ENCODE measurements at regions of chr13 and their contacts with region 1.

Region 1: GRCh38 chr13:102845630-102846260 is at the start of gene ERCC5:
- DNase-seq: peak; percentile 94 to 99 (median 97)
- ATAC-seq: peak; percentile 69
- H3K4me3 ChIP-seq: peak within 1 kb of the TSS; percentile 94 to 96
- H3K4me3 Mint-ChIP-seq: peak within 1 kb of the TSS; percentile 89
- H3K27ac ChIP-seq: peak within 1 kb of the TSS; percentile 98 to 99
- H3K27ac Mint-ChIP-seq: peak within 1 kb of the TSS; percentile 97
- H3K4me1 ChIP-seq: peaks cover 41% of the 10 kb centered on the region
- H3K4me1 Mint-ChIP-seq: peaks cover 45% of the 10 kb centered on the region
- H3K27me3 ChIP-seq: no peaks in the 10 kb centered on the region
- H3K27me3 Mint-ChIP-seq: no peaks in the 10 kb centered on the region
- CTCF ChIP-seq: no peak
- total RNA-seq, gene ERCC5: 109 to 121 TPM

Region 2: GRCh38 chr13:102580552-102581169 is 265.1 kb before region 1 on chr13:
- CTCF ChIA-PET with region 1: interaction called, 7 read pairs
- POLR2A ChIA-PET with region 1: interaction called, 9 read pairs
- intact Hi-C with region 1: loop called (anchors 1 kb)
- DNase-seq: peak in 4 of 9 experiments; percentile 20 to 80 (median 60)
- ATAC-seq: peak; percentile 87
- H3K4me3 ChIP-seq: no peak overlapping the region
- H3K4me3 Mint-ChIP-seq: no peak overlapping the region
- H3K27ac ChIP-seq: no peak overlapping the region
- H3K27ac Mint-ChIP-seq: no peak overlapping the region
- H3K4me1 ChIP-seq: peaks cover 9% of the 10 kb centered on the region
- H3K4me1 Mint-ChIP-seq: peaks cover 16% of the 10 kb centered on the region
- H3K27me3 ChIP-seq: peaks cover 0 to 2% of the 10 kb centered on the region in 2 experiments
- H3K27me3 Mint-ChIP-seq: peaks cover 3% of the 10 kb centered on the region
- CTCF ChIP-seq: peak; percentile 88

Region 3: GRCh38 chr13:102680842-102681740 is 164.7 kb before region 1 on chr13:
- CTCF ChIA-PET with region 1: interaction called, 3 read pairs
- POLR2A ChIA-PET with region 1: no interaction called
- intact Hi-C with region 1: loop called in 1 of 2 experiments (anchors 5 kb)
- DNase-seq: peak in 3 of 9 experiments; percentile 10 to 45 (median 22)
- ATAC-seq: peak; percentile 68
- H3K4me3 ChIP-seq: no peak overlapping the region
- H3K4me3 Mint-ChIP-seq: no peak overlapping the region
- H3K27ac ChIP-seq: peak overlapping the region in 1 of 2 experiments; percentile 14
- H3K27ac Mint-ChIP-seq: peak overlapping the region; percentile 80
- H3K4me1 ChIP-seq: peaks cover 1% of the 10 kb centered on the region
- H3K4me1 Mint-ChIP-seq: peaks cover 29% of the 10 kb centered on the region
- H3K27me3 ChIP-seq: no peaks in the 10 kb centered on the region
- H3K27me3 Mint-ChIP-seq: no peaks in the 10 kb centered on the region
- CTCF ChIP-seq: no peak

Region 4: GRCh38 chr13:102742101-102742500 is 103.6 kb before region 1 on chr13:
- CTCF ChIA-PET with region 1: no interaction called
- POLR2A ChIA-PET with region 1: no interaction called
- intact Hi-C with region 1: no loop called
- DNase-seq: no peak
- ATAC-seq: no peak
- H3K4me3 ChIP-seq: no peak overlapping the region
- H3K4me3 Mint-ChIP-seq: no peak overlapping the region
- H3K27ac ChIP-seq: no peak overlapping the region
- H3K27ac Mint-ChIP-seq: no peak overlapping the region
- H3K4me1 ChIP-seq: no peaks in the 10 kb centered on the region
- H3K4me1 Mint-ChIP-seq: no peaks in the 10 kb centered on the region
- H3K27me3 ChIP-seq: peaks cover 0 to 2% of the 10 kb centered on the region in 2 experiments
- H3K27me3 Mint-ChIP-seq: peaks cover 38% of the 10 kb centered on the region
- CTCF ChIP-seq: no peak

Region 5: DNA sequence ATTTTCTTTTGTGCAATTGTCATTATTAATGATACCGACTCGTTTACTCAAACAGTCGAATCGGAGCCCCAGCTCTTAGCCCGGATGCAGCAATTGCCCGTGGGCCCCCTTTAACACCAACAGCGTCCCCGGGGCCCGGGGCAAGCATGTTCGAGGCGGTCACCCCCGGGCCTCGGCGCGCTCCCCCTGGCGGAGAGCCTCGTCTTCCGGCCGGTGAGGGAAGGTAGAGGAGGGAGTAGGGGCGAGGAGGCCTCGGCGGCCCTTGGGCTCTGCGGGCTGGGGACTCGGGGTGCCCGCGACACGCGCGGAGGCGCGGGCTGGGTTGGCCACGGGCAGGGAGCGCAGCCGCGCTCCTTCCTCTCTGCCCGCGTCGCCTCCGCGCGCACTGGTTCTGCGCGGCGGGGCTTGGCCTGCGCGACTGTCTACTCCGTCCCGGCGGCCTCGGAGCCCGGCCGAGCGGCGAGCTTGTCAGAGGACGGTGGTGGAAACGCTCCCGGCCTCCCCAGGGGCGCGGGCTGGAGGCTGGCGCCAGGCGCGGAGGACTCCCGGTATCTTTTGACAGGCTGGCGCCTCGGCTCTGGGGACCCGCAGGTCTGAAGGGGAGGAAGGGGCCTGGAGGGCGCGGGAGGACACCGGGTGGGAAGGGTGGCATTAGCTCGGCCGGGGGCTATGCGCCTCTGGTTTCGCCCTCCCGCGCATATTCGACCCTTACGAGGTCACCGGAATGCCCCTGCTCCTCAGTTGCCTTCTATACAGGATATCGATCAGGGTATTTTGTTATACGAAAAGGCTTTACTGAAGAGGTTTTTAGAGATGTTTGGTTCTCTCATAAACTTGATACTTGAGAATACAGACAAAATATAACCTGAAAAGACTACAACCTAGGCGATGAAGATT is 45.4 kb before region 1 on chr13:
- CTCF ChIA-PET with region 1: interaction called, 6 read pairs
- POLR2A ChIA-PET with region 1: interaction called, 25 read pairs
- intact Hi-C with region 1: loop called (anchors 1 kb)
- DNase-seq: peak; percentile 65 to 89 (median 84)
- ATAC-seq: peak; percentile 77
- H3K4me3 ChIP-seq: peak overlapping the region; percentile 62 to 86
- H3K4me3 Mint-ChIP-seq: peak overlapping the region; percentile 92
- H3K27ac ChIP-seq: peak overlapping the region; percentile 36 to 44
- H3K27ac Mint-ChIP-seq: peak overlapping the region; percentile 74
- H3K4me1 ChIP-seq: peaks cover 10% of the 10 kb centered on the region
- H3K4me1 Mint-ChIP-seq: peaks cover 30% of the 10 kb centered on the region
- H3K27me3 ChIP-seq: peaks cover 0 to 5% of the 10 kb centered on the region in 2 experiments
- H3K27me3 Mint-ChIP-seq: peaks cover 11% of the 10 kb centered on the region
- CTCF ChIP-seq: peak; percentile 64

Measured in CD8-positive, alpha-beta T cell (primary cell).